CD4-positive, alpha-beta T cell (primary cell): ENCODE measurements at regions of chr22 and their contacts with region 1.

Region 1: GRCh38 chr22:46044621-46045438 is 67.9 kb upstream of the WNT7B start:
- DNase-seq: peak in 10 of 14 experiments; percentile 21 to 60 (median 42)
- ATAC-seq: peak; percentile 59
- H3K4me3 ChIP-seq: peak overlapping the region; percentile 52
- H3K4me3 Mint-ChIP-seq: peak overlapping the region; percentile 92
- H3K27ac ChIP-seq: peak overlapping the region; percentile 48 to 55
- H3K27ac Mint-ChIP-seq: peak overlapping the region; percentile 90
- H3K4me1 ChIP-seq: peaks cover 41% of the 10 kb centered on the region
- H3K4me1 Mint-ChIP-seq: peaks cover 34% of the 10 kb centered on the region
- H3K27me3 ChIP-seq: no peaks in the 10 kb centered on the region
- H3K27me3 Mint-ChIP-seq: no peaks in the 10 kb centered on the region
- CTCF ChIP-seq: no peak

Region 2: GRCh38 chr22:46071451-46072109 is 26.8 kb after region 1 on chr22:
- CTCF ChIA-PET with region 1: no interaction called
- POLR2A ChIA-PET with region 1: interaction called, 24 read pairs
- intact Hi-C with region 1: no loop called
- DNase-seq: peak; percentile 45 to 80 (median 60)
- ATAC-seq: peak; percentile 28
- H3K4me3 ChIP-seq: peak overlapping the region; percentile 38
- H3K4me3 Mint-ChIP-seq: peak overlapping the region; percentile 90
- H3K27ac ChIP-seq: peak overlapping the region in 1 of 2 donors; percentile 46
- H3K27ac Mint-ChIP-seq: peak overlapping the region; percentile 78
- H3K4me1 ChIP-seq: peaks cover 56% of the 10 kb centered on the region
- H3K4me1 Mint-ChIP-seq: peaks cover 55% of the 10 kb centered on the region
- H3K27me3 ChIP-seq: peaks cover 0 to 10% of the 10 kb centered on the region in 2 experiments
- H3K27me3 Mint-ChIP-seq: no peaks in the 10 kb centered on the region
- CTCF ChIP-seq: no peak